AG04449 (cell line): ENCODE measurements at regions of chr12 and their contacts with region 1.

Region 1: DNA sequence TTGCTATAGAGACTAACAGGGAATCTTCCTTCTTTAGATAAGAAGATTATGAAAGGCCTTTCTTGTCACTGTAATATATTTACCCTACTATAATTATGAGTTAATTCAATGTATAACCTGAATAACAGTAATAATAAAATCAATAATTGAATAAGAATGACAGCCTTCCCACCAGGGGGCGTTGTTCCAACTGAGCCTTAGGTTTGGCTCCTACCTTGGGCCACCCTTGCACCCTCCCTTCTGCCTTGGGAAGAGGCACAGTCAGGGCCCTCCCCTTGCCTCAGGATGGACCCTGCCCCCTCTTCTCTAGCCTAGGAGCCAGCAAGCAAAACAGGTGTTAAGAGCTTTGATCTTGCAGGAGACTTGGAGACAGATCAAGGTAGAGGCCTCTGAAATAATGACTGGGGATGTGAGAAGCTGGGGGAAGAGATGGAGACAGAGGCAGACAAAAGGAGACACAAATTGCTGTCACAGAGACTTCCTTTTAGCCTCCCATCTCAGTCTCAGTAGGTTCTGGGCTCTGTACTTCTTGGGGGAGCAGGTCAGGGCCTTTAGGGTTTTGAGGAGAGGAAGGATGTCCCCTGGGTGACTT is 40.1 kb upstream of the CISTR start:
- DNase-seq: no peak
- H3K4me3 ChIP-seq: no peak overlapping the region
- CTCF ChIP-seq: peak; percentile 34

Region 2: DNA sequence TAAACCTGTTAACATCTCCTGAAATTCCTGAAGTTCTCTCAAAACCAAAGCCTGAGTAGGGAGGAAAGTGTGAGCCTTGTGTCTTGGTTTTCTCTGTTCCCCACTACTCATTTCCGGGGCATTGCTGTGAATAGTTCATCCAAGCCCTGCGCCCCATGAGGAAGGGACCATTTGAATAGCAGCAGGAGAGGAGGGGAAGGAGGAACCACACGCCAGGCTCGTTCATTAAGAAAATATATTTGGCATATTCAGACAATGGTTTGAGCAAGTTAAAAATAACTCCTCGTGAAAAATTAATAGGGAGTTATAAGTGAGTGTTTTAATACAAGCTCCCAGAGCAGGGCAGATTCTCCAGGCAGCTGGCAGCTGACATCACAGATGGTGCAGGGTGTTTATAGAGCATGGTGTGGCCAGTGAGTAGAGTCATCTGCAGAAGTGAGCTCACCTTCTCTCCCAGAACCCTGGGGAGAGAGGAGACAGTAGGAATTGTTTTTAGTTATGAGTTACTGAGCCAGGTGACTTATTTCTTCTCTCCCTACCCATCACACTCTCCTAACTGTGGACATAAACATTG is 10.5 kb before region 1 on chr12:
- CTCF ChIA-PET with region 1: interaction called, 21 read pairs
- POLR2A ChIA-PET with region 1: no interaction called
- DNase-seq: no peak
- H3K4me3 ChIP-seq: no peak overlapping the region
- CTCF ChIP-seq: no peak

Region 3: GRCh38 chr12:53806721-53807120 is 14.9 kb after region 1 on chr12:
- CTCF ChIA-PET with region 1: interaction called, 28 read pairs
- POLR2A ChIA-PET with region 1: no interaction called
- DNase-seq: peak; percentile 3
- H3K4me3 ChIP-seq: no peak overlapping the region
- CTCF ChIP-seq: no peak

Region 4: DNA sequence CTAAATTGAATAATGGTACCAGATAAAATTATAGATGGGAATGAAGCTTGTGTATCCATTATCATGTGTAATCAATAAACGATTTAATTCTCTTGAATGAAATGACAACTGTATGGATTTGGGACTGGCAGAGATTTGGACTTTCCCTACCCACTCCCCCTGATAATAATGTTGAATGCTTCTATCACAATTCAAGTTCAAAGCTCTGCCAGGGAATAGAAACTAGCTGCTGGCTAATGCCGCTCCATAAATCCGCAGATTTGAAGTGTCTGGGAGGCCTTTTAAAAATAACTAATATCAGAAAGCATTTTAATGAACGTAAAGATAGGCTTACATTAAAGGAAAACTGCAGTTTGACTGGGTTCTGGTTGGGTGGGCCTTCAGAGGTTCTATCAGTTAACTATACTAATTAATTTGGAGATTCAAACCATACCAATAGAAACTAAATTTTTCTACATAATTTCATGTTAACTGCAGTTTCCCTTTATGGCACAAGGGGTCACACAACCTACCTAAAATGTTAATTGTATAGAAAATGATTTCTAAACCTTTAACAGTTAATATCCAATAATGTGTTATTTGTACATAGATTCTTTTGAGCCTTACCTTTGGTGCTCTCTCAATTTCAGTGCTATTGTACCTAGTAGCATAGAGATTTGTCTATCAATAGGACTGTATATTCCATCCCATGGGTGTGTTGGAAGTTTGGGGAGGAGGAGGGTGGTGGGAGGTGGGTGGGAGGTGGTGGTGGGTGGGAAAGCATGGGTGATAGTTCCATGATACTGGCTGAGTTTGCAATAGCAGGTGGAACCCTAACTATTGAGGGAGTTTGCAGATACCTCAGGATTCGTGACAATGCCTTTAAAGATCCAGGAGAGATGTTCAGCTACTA is 493.6 kb after region 1 on chr12:
- CTCF ChIA-PET with region 1: no interaction called
- POLR2A ChIA-PET with region 1: no interaction called
- DNase-seq: no peak
- H3K4me3 ChIP-seq: peak overlapping the region; percentile 6; the same call in 1 of the 2 replicates
- CTCF ChIP-seq: no peak